Activated CD8-positive, alpha-beta memory T cell treated with anti-CD3 and anti-CD28 coated beads, Interleukin-2, amount 10 ng/mL, durations not matched to agents 7 days and 5 days (primary cell): ENCODE measurements at regions of chr21 and their contacts with region 1.

Region 1: DNA sequence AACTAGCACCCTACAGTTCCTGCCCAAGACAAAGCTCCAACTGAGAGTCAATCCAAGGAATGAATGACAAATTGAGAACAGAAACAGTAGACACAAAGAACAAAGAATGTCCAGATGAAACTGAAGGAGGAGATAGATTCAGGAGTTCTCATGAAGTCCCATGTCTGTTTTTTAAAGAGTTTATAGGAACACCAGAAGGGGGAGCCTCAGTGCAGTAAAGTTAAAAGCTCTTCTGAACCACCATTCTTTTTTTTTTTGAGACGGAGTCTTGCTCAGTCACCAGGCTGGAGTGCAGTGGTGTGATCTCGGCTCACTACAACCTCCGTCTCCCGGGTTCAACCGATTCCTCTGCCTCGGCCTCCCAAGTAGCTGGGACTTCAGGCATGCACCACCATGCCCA is 323.6 kb downstream of the MRPL39 start:
- DNase-seq: no peak
- ATAC-seq: no peak
- H3K4me3 Mint-ChIP-seq: no peak overlapping the region
- H3K27ac Mint-ChIP-seq: no peak overlapping the region
- H3K4me1 Mint-ChIP-seq: no peaks in the 10 kb centered on the region
- H3K27me3 Mint-ChIP-seq: peaks cover 2% of the 10 kb centered on the region

Region 2: GRCh38 chr21:25385911-25386474 is 102.3 kb after region 1 on chr21:
- CTCF ChIA-PET with region 1: interaction called, 21 read pairs
- DNase-seq: no peak
- ATAC-seq: no peak
- H3K4me3 Mint-ChIP-seq: no peak overlapping the region
- H3K27ac Mint-ChIP-seq: no peak overlapping the region
- H3K4me1 Mint-ChIP-seq: peaks cover 12% of the 10 kb centered on the region
- H3K27me3 Mint-ChIP-seq: peaks cover under 1% of the 10 kb centered on the region